ENCODE measurements at regions of chr14 and their contacts with region 1.

Region 1: DNA sequence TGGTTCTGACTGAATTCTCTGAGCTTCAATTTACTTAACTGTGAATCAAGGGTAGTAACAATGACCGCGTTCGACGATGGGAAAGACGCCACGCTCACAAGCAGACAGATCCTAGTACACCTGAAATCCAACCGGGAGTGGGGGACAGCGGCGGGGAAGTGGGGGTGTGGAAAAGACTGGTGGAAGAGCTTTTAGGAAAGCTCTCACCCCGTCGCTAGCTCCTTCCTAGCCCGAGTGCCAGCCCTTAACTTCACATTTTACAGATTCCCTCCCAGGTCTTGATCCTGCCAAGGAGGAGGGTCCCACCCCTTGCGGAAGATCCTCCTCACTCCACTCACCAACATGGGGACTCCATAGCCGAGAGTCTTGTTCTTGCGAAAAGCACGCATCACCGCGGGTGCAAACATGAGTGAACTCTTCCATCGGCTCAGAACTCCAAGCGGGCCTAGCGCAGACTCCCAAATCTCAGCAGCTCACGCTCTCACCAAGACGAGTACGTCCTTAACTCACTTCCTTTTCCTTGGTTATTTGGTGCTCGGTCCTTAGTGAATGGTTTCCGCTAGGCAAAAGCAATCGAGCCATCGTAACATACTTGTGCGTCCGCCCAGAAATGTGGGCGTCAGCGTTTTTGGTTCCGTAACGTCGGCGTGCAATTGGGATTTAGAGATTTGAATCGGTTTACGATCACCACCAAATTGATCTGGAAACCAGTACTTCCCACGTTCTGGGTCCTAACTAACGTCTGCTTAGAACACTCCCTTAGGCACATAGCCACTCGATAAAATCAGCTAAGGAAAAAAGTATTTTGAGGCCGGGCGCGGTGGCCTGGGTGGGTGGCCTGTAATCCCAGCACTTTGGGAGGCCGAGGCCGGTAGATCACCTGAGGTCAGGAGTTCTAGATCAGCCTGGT is at the start of gene COX16:
- DNase-seq: peak; percentile 65 to 94 (median 79)
- ATAC-seq: peak; percentile 95
- H3K4me3 ChIP-seq: peak within 1 kb of the TSS; percentile 84 to 87
- H3K4me3 Mint-ChIP-seq: peak within 1 kb of the TSS; percentile 99
- H3K27ac ChIP-seq: peak within 1 kb of the TSS; percentile 56 to 75
- H3K27ac Mint-ChIP-seq: peak within 1 kb of the TSS; percentile 94
- H3K4me1 ChIP-seq: peaks cover 17% of the 10 kb centered on the region
- H3K4me1 Mint-ChIP-seq: peaks cover 47% of the 10 kb centered on the region
- H3K27me3 ChIP-seq: no peaks in the 10 kb centered on the region
- H3K27me3 Mint-ChIP-seq: no peaks in the 10 kb centered on the region
- CTCF ChIP-seq: no peak
- total RNA-seq, gene COX16: 15.4 to 22.4 TPM

Region 2: DNA sequence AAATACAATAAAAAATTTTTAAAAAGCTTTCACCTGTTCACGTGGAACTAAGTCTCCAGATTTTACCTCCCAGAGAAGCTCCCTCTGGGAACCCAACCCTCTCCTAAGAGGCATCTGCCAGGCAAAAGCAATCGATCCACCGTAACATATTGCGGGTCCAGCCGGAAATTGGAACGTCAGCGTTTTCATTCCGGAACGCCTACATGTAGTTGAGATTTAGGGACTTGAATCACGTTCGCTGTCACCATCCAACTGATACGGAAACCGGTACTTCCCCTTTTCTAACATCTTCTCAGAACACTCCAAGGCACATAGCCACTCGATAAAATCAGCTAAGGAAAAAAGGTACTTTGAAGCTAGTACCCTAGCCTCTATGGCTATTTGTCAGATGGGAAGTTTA is 70.3 kb before region 1 on chr14:
- CTCF ChIA-PET with region 1: no interaction called
- POLR2A ChIA-PET with region 1: no interaction called
- intact Hi-C with region 1: loop called (anchors 2 to 5 kb)
- DNase-seq: peak in 5 of 9 experiments; percentile 8 to 52 (median 19)
- ATAC-seq: no peak
- H3K4me3 ChIP-seq: no peak overlapping the region
- H3K4me3 Mint-ChIP-seq: peak overlapping the region; percentile 56
- H3K27ac ChIP-seq: no peak overlapping the region
- H3K27ac Mint-ChIP-seq: no peak overlapping the region
- H3K4me1 ChIP-seq: no peaks in the 10 kb centered on the region
- H3K4me1 Mint-ChIP-seq: peaks cover 3% of the 10 kb centered on the region
- H3K27me3 ChIP-seq: no peaks in the 10 kb centered on the region
- H3K27me3 Mint-ChIP-seq: peaks cover 4% of the 10 kb centered on the region
- CTCF ChIP-seq: no peak

Region 3: GRCh38 chr14:70378696-70379095 is 19.3 kb after region 1 on chr14:
- CTCF ChIA-PET with region 1: no interaction called
- POLR2A ChIA-PET with region 1: no interaction called
- intact Hi-C with region 1: no loop called
- DNase-seq: no peak
- ATAC-seq: no peak
- H3K4me3 ChIP-seq: no peak overlapping the region
- H3K4me3 Mint-ChIP-seq: no peak overlapping the region
- H3K27ac ChIP-seq: no peak overlapping the region
- H3K27ac Mint-ChIP-seq: no peak overlapping the region
- H3K4me1 ChIP-seq: no peaks in the 10 kb centered on the region
- H3K4me1 Mint-ChIP-seq: no peaks in the 10 kb centered on the region
- H3K27me3 ChIP-seq: no peaks in the 10 kb centered on the region
- H3K27me3 Mint-ChIP-seq: no peaks in the 10 kb centered on the region
- CTCF ChIP-seq: no peak

Region 4: DNA sequence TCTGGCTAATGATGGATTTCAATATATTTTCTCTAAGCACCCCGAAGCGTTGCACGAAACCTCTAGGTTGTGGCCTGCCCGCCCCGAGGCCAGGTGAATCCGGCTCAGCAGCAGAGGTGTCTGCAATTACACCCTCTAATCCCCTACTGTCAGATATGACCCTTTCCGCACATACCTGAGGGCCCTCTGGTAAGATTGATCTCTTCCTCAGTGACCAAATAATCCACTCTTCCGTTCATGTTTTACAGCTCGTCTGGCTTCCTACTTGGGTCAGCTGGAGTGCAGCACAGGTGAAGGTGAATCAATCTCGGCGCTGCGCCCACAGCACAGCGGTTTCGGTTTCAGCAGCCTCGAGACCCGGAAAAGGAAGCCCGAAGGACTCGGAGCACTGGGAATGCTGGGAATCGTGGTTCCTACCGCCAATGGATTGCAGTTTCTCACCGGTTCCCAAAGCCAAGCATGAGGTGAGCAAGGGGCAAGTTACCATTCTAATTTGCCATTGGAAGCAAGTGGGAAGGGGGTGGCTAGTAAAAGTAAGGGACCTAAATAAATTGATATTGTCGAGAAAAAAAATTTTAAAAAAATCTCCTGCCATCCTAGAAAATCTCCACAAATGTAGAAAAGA is 57.4 kb after region 1 on chr14 and contains the start of gene SYNJ2BP:
- CTCF ChIA-PET with region 1: no interaction called
- POLR2A ChIA-PET with region 1: no interaction called
- intact Hi-C with region 1: loop called (anchors 1 to 5 kb)
- DNase-seq: peak; percentile 11 to 79 (median 64)
- ATAC-seq: peak; percentile 81
- H3K4me3 ChIP-seq: peak within 1 kb of the TSS; percentile 51 to 95
- H3K4me3 Mint-ChIP-seq: peak within 1 kb of the TSS; percentile 95
- H3K27ac ChIP-seq: peak within 1 kb of the TSS; percentile 31 to 71
- H3K27ac Mint-ChIP-seq: peak within 1 kb of the TSS; percentile 93
- H3K4me1 ChIP-seq: peaks cover 18% of the 10 kb centered on the region
- H3K4me1 Mint-ChIP-seq: peaks cover 47% of the 10 kb centered on the region
- H3K27me3 ChIP-seq: no peaks in the 10 kb centered on the region
- H3K27me3 Mint-ChIP-seq: peaks cover 2% of the 10 kb centered on the region
- CTCF ChIP-seq: no peak
- total RNA-seq, gene SYNJ2BP: 5.5 to 6.5 TPM